Pancreas (tissue), 10 donors: ENCODE measurements at regions of chr18 and their contacts with region 1.

Region 1: GRCh38 chr18:12934454-12935071 is 13.2 kb upstream of the SEH1L start:
- DNase-seq: peak; percentile 63 to 86 (median 76)
- ATAC-seq: peak; percentile 88 to 99 (median 98)
- H3K4me3 ChIP-seq: no peak overlapping the region
- H3K27ac ChIP-seq: no peak overlapping the region
- H3K4me1 ChIP-seq: no peaks in the 10 kb centered on the region
- H3K27me3 ChIP-seq: no peaks in the 10 kb centered on the region
- CTCF ChIP-seq: peak; percentile 40 to 76 (median 66)

Region 2: DNA sequence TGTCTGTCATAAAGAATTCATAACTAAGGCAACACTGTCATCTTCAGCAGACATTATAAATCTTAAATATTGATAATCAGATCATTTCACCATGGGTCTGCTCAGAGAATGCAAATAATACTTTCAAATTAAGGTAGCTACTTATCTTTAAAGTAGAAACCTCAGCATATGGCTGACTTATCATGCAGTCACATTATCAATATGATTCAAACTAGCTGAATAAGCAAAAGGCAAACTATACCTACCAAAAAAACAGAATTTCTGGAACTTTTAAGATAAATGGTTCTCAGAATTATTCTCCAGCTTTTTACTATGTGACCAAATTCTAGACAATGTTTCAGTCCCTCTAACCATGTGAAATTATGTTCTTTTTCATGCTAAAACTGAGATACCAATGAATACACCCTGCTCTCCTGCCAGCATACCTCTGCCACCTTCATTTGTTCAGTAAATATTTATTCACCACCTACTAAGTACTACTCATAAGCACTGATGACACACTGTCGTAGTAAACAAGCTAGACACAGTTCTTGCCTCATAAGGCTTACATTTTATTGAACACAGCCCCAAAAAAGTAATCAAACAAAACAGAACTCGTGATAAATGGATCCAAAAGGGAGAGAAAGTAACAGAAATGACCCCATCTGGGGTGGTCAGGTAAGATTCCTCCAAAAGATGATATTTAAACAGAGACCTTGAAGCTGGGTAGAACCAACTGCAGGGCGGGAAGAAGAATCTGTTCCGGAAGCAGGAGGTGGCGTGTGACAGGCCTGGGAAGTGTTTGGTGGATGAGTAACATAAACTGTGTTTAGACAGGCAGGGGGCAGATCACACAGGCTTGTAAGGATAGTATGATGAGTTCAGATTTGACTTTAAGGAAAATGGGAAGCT is 294.3 kb before region 1 on chr18:
- intact Hi-C with region 1: no loop called
- DNase-seq: no peak
- ATAC-seq: peak in 1 of 4 donors; percentile 32
- H3K4me3 ChIP-seq: no peak overlapping the region
- H3K27ac ChIP-seq: no peak overlapping the region
- H3K4me1 ChIP-seq: no peaks in the 10 kb centered on the region
- H3K27me3 ChIP-seq: no peaks in the 10 kb centered on the region
- CTCF ChIP-seq: no peak

Region 3: DNA sequence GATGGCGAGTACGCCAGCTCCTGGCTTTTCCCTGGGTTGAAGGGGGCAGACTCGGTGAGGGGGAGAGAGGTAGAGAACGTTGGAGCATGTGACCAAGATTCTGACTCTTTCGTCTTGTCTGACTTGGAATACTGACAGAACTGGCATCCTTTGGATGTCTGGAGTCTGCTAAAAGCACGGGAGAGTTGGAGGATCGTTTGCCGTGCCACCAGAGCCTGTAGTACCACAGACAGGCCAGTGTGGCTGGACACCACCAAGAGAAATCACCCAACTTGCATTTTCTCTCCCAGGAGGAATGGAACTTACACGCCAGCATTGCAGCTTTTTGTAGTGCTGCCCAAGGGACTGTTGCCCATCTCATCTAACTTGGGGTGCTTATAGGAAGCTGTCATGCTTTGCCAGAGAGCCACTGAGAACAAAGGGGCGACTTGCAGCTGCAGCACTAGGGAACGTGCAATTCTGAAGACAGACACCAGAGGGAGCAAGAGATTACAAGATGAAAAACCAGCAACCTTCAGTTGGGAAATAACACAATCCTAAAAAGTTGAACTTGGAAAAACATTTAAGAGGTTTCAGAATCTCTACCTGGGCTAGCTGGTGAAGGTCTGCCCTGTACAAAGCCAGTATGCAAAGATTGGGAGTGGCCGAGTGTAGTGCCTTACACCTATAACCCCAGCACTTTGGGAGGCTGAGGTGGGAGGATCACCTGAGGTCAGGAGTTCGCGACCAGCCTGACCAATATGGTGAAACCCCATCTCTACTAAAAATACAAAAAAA is 207.6 kb before region 1 on chr18:
- intact Hi-C with region 1: loop called (anchors 5 to 10 kb)
- DNase-seq: peak in 3 of 6 donors; percentile 27 to 58 (median 31)
- ATAC-seq: peak; percentile 43 to 93 (median 87)
- H3K4me3 ChIP-seq: no peak overlapping the region
- H3K27ac ChIP-seq: no peak overlapping the region
- H3K4me1 ChIP-seq: no peaks in the 10 kb centered on the region
- H3K27me3 ChIP-seq: no peaks in the 10 kb centered on the region
- CTCF ChIP-seq: peak; percentile 80 to 94 (median 90)

Region 4: DNA sequence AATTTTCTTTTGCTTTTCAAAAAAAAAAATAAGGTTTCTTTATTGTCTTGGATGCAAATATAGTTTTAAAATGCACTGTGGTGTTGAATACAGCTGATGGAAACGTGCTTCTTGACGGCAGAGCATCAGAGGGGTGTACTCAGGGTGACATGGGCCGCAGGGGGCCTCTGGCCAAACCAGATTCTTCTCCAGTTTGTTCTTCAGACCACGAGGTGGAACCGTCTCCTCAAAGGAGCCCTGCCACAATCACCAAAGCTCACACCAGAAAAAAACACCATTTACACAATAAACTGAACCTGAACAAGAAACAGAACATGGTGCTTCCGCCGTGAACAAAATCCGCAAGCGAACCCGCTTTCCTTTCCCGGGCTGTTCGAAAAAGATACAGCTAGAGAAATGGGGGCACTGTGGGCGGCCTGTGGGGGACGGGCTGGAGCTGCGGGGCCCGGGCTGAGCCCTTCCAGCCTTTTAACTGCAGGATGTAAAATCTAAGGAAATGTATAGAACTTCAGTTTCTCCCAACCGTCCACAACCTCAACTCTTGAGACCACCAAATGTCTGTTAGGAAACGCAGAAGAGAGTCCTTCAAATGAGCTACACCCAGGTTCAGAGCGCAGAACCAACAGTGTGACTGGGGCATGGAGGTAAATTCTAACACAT is 197.2 kb before region 1 on chr18:
- intact Hi-C with region 1: loop called (anchors 5 to 10 kb)
- DNase-seq: no peak
- ATAC-seq: no peak
- H3K4me3 ChIP-seq: no peak overlapping the region
- H3K27ac ChIP-seq: no peak overlapping the region
- H3K4me1 ChIP-seq: no peaks in the 10 kb centered on the region
- H3K27me3 ChIP-seq: no peaks in the 10 kb centered on the region
- CTCF ChIP-seq: no peak

Region 5: DNA sequence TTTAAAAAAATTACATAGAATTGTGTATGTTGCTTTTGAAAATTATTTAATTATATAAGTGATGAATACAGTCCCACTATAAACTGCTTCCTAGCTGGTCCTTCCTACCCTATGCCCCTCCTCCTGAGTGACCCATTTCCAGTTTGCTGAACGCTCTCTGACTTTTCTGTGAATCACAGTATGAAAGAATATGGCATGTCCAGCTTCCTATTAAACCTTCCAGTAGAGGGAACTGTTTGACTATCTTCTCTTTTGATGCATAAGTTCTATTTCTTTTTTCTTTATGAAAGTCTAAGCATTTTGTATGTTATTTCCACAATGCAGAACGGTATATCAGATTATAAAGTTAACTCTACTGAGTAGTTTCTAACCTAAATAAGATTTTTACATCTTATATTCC is 190.5 kb before region 1 on chr18:
- intact Hi-C with region 1: loop called in 2 of 3 experiments (anchors 5 to 10 kb)
- DNase-seq: no peak
- ATAC-seq: peak in 3 of 4 donors; percentile 66 to 73 (median 70)
- H3K4me3 ChIP-seq: no peak overlapping the region
- H3K27ac ChIP-seq: no peak overlapping the region
- H3K4me1 ChIP-seq: no peaks in the 10 kb centered on the region
- H3K27me3 ChIP-seq: no peaks in the 10 kb centered on the region
- CTCF ChIP-seq: peak in 3 of 4 donors; percentile 5 to 55 (median 25)

Region 6: DNA sequence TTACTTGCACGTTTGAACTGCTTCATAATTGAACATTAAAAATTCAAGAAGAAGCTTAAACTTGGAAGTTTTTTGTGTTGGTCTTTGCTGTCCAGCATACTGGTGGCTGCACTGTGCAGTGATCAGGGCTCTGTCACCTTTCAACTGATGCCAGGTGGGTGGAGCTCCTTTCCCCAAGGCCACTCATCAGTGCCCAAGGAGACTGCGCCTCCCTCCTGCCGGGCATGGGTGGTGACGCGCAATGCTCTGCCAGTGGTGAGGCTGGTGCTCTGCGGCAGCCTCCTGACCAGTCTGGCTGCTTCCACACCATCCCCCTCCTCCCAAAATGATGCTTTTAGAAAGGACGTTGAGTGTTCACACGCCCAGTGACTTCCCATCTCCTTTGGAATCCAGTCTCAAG is 268.0 kb after region 1 on chr18:
- intact Hi-C with region 1: no loop called
- DNase-seq: no peak
- ATAC-seq: peak in 1 of 4 donors; percentile 58
- H3K4me3 ChIP-seq: no peak overlapping the region
- H3K27ac ChIP-seq: no peak overlapping the region
- H3K4me1 ChIP-seq: no peaks in the 10 kb centered on the region
- H3K27me3 ChIP-seq: peaks cover 0 to 4% (median 0%) of the 10 kb centered on the region in 4 donors
- CTCF ChIP-seq: no peak